Sigmoid colon (tissue), 7 donors: ENCODE measurements at regions of chr7 and their contacts with region 1.

Region 1: GRCh38 chr7:81499262-81500116 is 270.4 kb downstream of the HGF start:
- DNase-seq: no peak
- H3K4me3 ChIP-seq: no peak overlapping the region
- H3K27ac ChIP-seq: peak overlapping the region; percentile 54 to 71 (median 60)
- H3K4me1 ChIP-seq: peaks cover 0 to 27% (median 21%) of the 10 kb centered on the region in 4 donors
- H3K27me3 ChIP-seq: no peaks in the 10 kb centered on the region
- CTCF ChIP-seq: peak; percentile 42 to 64 (median 54)
- EP300 ChIP-seq: peak in 1 of 4 donors; percentile 18
- POLR2A ChIP-seq: no peak

Region 2: DNA sequence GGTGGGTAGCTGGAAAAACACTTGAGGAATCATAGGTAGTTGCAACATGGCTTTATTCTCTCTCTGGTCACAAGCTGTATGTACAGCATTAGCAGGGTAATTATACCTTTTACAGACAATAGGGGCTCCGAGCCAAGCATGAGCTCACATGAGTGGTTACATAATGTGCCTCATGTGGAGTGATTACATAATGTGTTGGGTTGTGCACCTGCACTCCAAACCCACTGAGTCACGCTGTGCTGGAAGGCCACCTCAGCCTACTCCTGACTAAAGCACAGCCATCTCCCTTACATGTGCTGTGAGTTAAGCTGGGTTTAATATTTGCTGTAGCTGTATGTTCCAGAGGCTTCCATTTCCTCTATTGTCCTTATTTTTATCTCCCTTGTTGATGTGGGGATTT is 232.0 kb before region 1 on chr7:
- intact Hi-C with region 1: no loop called
- DNase-seq: no peak
- H3K4me3 ChIP-seq: no peak overlapping the region
- H3K27ac ChIP-seq: no peak overlapping the region
- H3K4me1 ChIP-seq: no peaks in the 10 kb centered on the region
- H3K27me3 ChIP-seq: no peaks in the 10 kb centered on the region
- CTCF ChIP-seq: no peak
- EP300 ChIP-seq: no peak
- POLR2A ChIP-seq: no peak

Region 3: GRCh38 chr7:81949306-81949705 is 449.8 kb after region 1 on chr7:
- intact Hi-C with region 1: loop called (anchors 5 kb)
- DNase-seq: no peak
- H3K4me3 ChIP-seq: no peak overlapping the region
- H3K27ac ChIP-seq: no peak overlapping the region
- H3K4me1 ChIP-seq: peaks cover 0 to 9% (median 6%) of the 10 kb centered on the region in 4 donors
- H3K27me3 ChIP-seq: no peaks in the 10 kb centered on the region
- CTCF ChIP-seq: no peak
- EP300 ChIP-seq: no peak
- POLR2A ChIP-seq: no peak

Region 4: DNA sequence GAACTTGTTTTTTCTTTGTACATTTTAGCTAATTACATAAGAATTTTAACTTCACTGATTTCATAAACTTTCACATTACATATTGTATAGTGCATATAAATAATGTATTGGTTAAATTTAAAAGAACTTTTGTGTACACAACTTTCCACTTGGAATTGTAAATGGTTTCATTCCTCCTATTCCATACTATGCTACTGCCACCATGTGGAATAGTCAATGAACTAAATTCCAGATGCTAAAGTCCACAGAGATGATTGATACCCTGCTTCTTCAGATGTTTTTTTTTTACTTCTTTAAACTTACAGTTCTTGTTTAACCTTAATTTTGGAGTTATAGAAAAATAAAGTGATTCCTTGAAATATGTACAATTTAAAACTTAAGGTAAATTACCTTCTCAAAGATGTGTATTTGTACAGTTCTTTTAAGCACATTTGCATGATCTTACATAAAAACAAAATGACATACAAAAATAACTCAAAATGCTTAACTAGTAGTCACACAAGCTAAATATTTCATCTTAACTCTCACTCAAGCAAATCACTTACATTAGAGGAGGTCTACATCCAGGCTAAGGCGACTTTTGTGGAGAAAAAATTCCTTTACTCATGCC is 518.0 kb after region 1 on chr7:
- intact Hi-C with region 1: loop called (anchors 5 kb)
- DNase-seq: no peak
- H3K4me3 ChIP-seq: no peak overlapping the region
- H3K27ac ChIP-seq: no peak overlapping the region
- H3K4me1 ChIP-seq: peaks cover 0 to 26% (median 5%) of the 10 kb centered on the region in 4 donors
- H3K27me3 ChIP-seq: no peaks in the 10 kb centered on the region
- CTCF ChIP-seq: peak; percentile 10 to 36 (median 27)
- EP300 ChIP-seq: no peak
- POLR2A ChIP-seq: no peak

Region 5: DNA sequence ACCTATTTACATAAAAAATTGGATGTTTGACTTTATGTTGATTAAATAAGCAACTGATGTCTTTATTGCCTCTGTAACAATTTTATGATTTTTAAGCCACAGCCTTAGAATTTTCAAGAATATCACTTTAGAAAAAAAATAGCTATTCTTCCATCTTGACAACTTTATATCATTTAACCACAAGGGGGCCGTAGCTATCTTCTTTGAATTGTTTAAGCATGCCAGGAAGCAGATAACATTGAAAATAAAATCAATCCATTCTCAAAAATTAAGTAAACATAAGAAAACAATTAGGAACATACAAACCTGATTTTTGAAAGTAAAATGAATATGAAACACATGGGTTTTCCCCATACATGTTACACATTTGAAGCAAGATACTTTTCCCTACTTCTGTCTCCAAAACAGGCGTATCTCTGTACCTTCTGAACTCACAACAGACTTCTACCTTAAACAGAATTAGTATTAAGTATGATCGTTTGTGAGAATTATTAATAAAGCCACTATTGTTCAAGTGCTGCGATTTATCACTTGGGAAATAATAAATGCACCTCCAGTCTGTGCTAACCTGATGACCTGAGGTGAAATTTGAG is 735.1 kb after region 1 on chr7:
- intact Hi-C with region 1: loop called (anchors 10 kb)
- DNase-seq: no peak
- H3K4me3 ChIP-seq: no peak overlapping the region
- H3K27ac ChIP-seq: peak overlapping the region in 2 of 4 donors; percentile 48 to 52
- H3K4me1 ChIP-seq: peaks cover 0 to 21% (median 11%) of the 10 kb centered on the region in 4 donors
- H3K27me3 ChIP-seq: no peaks in the 10 kb centered on the region
- CTCF ChIP-seq: peak; percentile 17 to 62 (median 43)
- EP300 ChIP-seq: no peak
- POLR2A ChIP-seq: no peak

Region 6: DNA sequence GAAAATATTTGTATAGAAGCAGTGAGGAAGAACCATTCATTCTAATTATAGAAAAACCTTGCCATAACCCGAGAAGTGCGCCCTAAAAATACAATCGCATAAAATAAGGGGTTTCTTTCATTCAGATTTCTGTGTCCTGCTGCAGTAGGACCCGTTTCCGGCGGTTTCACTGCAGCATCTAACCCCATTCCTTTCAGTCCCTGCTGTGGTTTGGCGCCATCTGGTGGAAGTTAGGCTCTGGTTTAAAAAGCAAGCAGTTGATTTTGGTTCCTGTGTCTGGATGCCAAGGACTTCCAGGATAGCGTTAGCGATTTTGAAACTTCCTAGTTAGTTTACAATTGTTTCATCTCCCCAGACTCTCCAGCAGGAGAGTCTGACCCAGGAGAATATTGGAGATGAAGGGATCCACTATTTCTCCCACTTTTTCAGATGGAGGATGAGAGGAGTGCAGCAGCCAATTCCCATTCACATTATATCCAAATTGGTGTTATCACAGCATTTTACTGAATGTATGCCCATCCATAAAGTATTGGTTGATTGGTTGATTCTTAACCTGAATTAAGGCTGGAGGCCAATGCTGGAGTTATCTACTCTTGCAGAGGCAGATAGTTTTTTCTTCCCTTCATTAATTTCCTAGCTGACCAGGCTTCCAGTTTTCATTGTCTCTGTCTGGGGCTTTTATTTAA is 1072.8 kb after region 1 on chr7:
- intact Hi-C with region 1: loop called (anchors 5 kb)
- DNase-seq: peak; percentile 92
- H3K4me3 ChIP-seq: no peak overlapping the region
- H3K27ac ChIP-seq: no peak overlapping the region
- H3K4me1 ChIP-seq: peaks cover 0 to 3% (median 0%) of the 10 kb centered on the region in 4 donors
- H3K27me3 ChIP-seq: no peaks in the 10 kb centered on the region
- CTCF ChIP-seq: peak; percentile 57 to 93 (median 77)
- EP300 ChIP-seq: no peak
- POLR2A ChIP-seq: no peak

Region 7: GRCh38 chr7:82605247-82605872 is 1105.9 kb after region 1 on chr7:
- intact Hi-C with region 1: loop called (anchors 10 kb)
- DNase-seq: no peak
- H3K4me3 ChIP-seq: no peak overlapping the region
- H3K27ac ChIP-seq: no peak overlapping the region
- H3K4me1 ChIP-seq: peaks cover 0 to 8% (median 3%) of the 10 kb centered on the region in 4 donors
- H3K27me3 ChIP-seq: no peaks in the 10 kb centered on the region
- CTCF ChIP-seq: peak; percentile 19 to 54 (median 45)
- EP300 ChIP-seq: no peak
- POLR2A ChIP-seq: no peak

Region 8: DNA sequence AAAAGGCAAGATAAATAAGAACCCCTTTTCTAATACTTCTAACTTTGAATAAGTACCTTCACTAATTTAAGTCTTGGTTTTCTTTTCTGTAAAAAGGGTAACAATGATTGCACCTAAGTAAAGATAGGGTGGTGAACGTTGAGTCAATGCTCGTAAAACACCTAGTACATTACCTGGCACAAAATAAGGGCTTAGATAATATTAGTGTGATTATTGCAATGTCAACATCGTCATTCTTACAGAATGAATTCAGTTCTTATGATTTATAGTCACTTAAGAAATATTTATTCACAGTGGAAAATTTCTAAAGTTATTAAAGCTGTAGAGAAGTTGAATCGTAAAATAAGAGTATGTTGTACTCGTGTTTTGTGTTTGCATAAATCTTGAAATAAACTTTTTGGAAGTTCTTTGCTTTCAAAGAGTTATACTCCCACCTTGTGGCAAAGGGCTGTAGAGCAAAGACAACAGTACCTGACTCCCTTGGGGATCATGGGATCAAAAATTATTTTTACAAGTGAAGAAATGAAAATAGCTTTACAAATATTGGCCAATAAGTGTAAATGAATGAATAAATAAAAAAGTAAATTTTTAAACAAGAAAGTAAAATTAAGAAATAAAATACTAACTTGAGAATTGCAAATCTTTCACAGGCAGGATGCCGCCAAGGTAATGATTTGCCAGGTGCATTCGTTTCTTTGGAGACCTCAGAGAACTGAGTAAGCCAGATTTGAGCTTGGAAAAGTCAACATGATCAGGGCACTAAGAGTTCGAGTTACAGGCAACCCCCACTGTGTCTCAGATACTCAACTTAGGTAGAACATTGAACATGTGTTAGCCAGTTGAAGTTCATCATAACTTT is 1229.9 kb after region 1 on chr7:
- intact Hi-C with region 1: loop called (anchors 5 kb)
- DNase-seq: no peak
- H3K4me3 ChIP-seq: no peak overlapping the region
- H3K27ac ChIP-seq: no peak overlapping the region
- H3K4me1 ChIP-seq: peaks cover 0 to 6% (median 2%) of the 10 kb centered on the region in 4 donors
- H3K27me3 ChIP-seq: no peaks in the 10 kb centered on the region
- CTCF ChIP-seq: peak; percentile 27 to 59 (median 35)
- EP300 ChIP-seq: no peak
- POLR2A ChIP-seq: no peak